Mammary epithelial cell (primary cell): ENCODE measurements at regions of chr17 and their contacts with region 1.

Region 1: DNA sequence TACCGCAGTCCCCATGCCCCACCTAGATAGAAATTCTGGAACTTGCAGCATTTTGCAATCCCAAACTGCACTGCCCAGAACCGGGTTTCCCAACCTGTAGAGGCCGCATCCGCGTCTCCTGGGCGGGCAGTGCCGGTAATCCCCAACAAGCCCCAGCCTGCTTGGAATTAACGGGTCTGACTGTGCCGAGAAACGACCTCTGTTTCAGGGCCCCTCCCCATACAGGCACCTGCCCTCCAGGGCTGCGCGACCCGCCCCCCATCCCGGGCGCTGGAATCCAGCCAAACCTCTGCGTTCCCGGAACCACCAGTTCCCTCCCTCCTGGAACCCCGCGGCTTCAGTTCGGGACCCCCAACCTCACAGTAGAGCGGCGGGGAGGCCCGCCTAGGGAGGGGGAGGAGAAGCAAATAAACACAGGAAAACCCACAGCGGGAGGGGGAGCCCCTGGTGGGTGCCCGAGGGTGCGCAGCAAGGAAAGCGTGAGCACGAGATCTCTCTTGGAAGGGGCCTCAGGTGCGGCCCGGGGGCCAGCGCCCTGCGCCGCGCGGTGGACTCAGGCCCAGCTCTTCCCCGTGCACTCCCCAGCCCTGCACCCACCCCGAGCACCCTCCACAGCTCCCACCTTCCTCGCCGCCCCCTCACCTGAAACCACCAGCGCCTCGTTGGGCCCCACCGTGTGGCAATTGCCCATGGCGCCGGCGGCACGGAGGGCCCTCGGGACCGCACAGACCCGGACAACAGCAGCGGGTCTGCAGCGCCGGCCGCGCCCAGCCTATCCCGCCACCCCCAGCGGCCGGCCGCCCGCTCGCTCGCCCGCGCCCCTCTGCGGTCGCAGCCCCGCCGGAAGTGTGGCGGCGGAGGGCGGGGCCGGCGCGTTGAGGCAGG is at the start of gene FLOT2:
- DNase-seq: peak; percentile 93
- H3K4me3 ChIP-seq: peak within 1 kb of the TSS; percentile 63 to 82 (median 74)
- H3K27ac ChIP-seq: peak within 1 kb of the TSS; percentile 69
- H3K4me1 ChIP-seq: peaks cover 27% of the 10 kb centered on the region
- H3K27me3 ChIP-seq: no peaks in the 10 kb centered on the region
- CTCF ChIP-seq: peak in 1 of 2 donors; percentile 24
- total RNA-seq, gene FLOT2: 80.2 to 129 TPM

Region 2: GRCh38 chr17:28743225-28744103 is 153.7 kb before region 1 on chr17 and contains the start of gene TRAF4:
- CTCF ChIA-PET with region 1: no interaction called
- dilution Hi-C with region 1: no loop called
- in situ Hi-C with region 1: no loop called
- intact Hi-C with region 1: loop called (anchors 1 kb)
- DNase-seq: peak; percentile 98
- H3K4me3 ChIP-seq: peak within 1 kb of the TSS; percentile 88 to 96 (median 91)
- H3K27ac ChIP-seq: peak within 1 kb of the TSS; percentile 98
- H3K4me1 ChIP-seq: peaks cover 29% of the 10 kb centered on the region
- H3K27me3 ChIP-seq: no peaks in the 10 kb centered on the region
- CTCF ChIP-seq: peak in 1 of 2 donors; percentile 18
- total RNA-seq, gene TRAF4: 50.5 to 147 TPM

Region 3: DNA sequence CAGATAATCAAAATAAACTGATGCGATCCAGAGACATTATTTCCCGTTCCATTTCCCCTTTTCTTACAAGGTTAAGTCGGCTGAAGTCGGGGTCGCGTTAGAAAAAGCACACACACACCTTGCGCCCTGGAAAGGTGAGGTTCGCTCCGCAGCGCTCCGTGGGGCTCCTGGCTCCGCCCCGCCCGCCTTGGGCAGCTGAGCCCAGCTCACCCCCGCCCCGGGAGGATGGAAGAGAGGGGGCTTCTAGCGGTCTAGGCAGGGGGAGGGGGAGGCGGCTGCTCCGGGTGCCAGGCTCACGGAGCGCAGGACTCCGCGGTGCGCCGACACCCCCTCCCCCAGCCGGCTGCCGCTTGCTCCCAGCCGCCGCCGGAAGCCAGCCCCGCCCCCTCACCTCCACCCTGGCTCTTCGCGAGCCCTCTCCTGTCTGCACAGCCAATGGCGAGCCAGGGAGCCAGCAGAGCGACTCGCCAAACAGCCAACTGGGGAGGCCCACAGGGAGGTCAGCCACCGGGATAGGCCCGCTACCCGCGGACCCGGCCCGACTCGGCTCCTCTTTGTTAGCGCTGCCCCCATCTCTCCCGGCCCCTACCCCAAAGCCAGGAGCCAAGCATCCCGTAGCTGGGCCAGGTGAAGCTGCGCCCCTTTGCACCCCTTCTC is 84.9 kb before region 1 on chr17:
- CTCF ChIA-PET with region 1: interaction called, 4 read pairs
- dilution Hi-C with region 1: no loop called
- in situ Hi-C with region 1: no loop called
- intact Hi-C with region 1: loop called (anchors 2 kb)
- DNase-seq: peak; percentile 97
- H3K4me3 ChIP-seq: peak overlapping the region; percentile 75 to 97 (median 97)
- H3K27ac ChIP-seq: peak overlapping the region; percentile 99
- H3K4me1 ChIP-seq: peaks cover 34% of the 10 kb centered on the region
- H3K27me3 ChIP-seq: no peaks in the 10 kb centered on the region
- CTCF ChIP-seq: no peak

Region 4: DNA sequence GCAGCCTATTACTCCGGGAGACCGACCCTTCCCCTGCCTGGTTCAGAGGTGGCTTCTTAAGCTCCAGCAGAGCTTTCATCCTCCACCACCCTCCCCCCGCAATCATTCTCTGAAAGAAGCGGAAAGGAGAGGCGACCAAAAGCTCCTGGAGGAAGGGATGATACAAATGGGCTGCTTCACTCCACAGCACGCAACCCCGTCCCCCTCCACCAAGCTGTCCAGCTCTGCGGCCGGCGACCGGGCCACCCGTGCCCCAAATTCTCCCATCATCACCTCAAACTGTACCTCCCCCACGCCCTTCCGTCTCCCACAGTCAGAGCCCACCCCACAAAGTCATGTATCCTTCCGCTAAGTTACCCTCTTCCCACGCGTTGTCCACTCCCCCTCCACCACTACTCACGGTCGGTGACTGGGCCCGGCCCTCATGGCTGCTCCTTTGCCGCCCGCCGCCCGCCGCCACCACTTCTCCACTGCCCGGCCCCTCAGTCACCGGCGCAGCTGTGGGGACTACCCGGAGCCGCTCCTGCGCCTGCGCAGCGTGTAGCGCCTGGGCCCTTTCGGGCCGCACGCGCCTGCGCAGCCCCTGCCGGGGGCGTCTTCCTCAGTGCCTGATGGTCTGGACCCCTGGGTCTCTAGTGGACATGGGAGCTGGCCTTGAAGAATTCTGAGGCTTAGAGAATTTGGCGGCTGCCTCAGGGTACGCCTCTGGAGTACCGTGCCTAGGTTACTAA is 54.7 kb before region 1 on chr17 and contains the start of gene FAM222B:
- CTCF ChIA-PET with region 1: interaction called, 3 read pairs
- dilution Hi-C with region 1: no loop called
- in situ Hi-C with region 1: no loop called
- intact Hi-C with region 1: loop called (anchors 2 kb)
- DNase-seq: peak; percentile 76
- H3K4me3 ChIP-seq: peak within 1 kb of the TSS; percentile 84 to 95 (median 91)
- H3K27ac ChIP-seq: peak within 1 kb of the TSS; percentile 54
- H3K4me1 ChIP-seq: peaks cover 3% of the 10 kb centered on the region
- H3K27me3 ChIP-seq: no peaks in the 10 kb centered on the region
- CTCF ChIP-seq: no peak
- total RNA-seq, gene FAM222B: 11.0 to 28.9 TPM

Region 5: GRCh38 chr17:28854457-28855350 is 42.4 kb before region 1 on chr17 and contains the start of gene ERAL1:
- CTCF ChIA-PET with region 1: no interaction called
- dilution Hi-C with region 1: no loop called
- in situ Hi-C with region 1: no loop called
- intact Hi-C with region 1: loop called (anchors 2 kb)
- DNase-seq: peak; percentile 85
- H3K4me3 ChIP-seq: peak within 1 kb of the TSS; percentile 61 to 82 (median 69)
- H3K27ac ChIP-seq: peak within 1 kb of the TSS; percentile 43
- H3K4me1 ChIP-seq: peaks cover 12% of the 10 kb centered on the region
- H3K27me3 ChIP-seq: no peaks in the 10 kb centered on the region
- CTCF ChIP-seq: peak in 1 of 2 donors; percentile 8
- total RNA-seq, gene ERAL1: 48.4 to 53.2 TPM

Region 6: GRCh38 chr17:28878981-28879380 is 18.1 kb before region 1 on chr17:
- CTCF ChIA-PET with region 1: interaction called, 7 read pairs
- dilution Hi-C with region 1: no loop called
- in situ Hi-C with region 1: no loop called
- intact Hi-C with region 1: loop called (anchors 2 kb)
- DNase-seq: peak; percentile 61
- H3K4me3 ChIP-seq: no peak overlapping the region
- H3K27ac ChIP-seq: peak overlapping the region; percentile 54
- H3K4me1 ChIP-seq: peaks cover 39% of the 10 kb centered on the region
- H3K27me3 ChIP-seq: no peaks in the 10 kb centered on the region
- CTCF ChIP-seq: peak; percentile 54 to 69

Region 7: GRCh38 chr17:28992625-28993600 is 95.8 kb after region 1 on chr17:
- CTCF ChIA-PET with region 1: no interaction called
- dilution Hi-C with region 1: no loop called
- in situ Hi-C with region 1: no loop called
- intact Hi-C with region 1: no loop called
- DNase-seq: peak; percentile 14
- H3K4me3 ChIP-seq: no peak overlapping the region
- H3K27ac ChIP-seq: no peak overlapping the region
- H3K4me1 ChIP-seq: peaks cover 6% of the 10 kb centered on the region
- H3K27me3 ChIP-seq: peaks cover 1% of the 10 kb centered on the region
- CTCF ChIP-seq: peak in 1 of 2 donors; percentile 10